Right ventricle myocardium inferior (tissue), 1 donor: ENCODE measurements at regions of chr14 and their contacts with region 1.

Region 1: GRCh38 chr14:32786886-32787285 is 151.8 kb upstream of the NPAS3 start:
- DNase-seq: no peak
- ATAC-seq: no peak

Region 2: DNA sequence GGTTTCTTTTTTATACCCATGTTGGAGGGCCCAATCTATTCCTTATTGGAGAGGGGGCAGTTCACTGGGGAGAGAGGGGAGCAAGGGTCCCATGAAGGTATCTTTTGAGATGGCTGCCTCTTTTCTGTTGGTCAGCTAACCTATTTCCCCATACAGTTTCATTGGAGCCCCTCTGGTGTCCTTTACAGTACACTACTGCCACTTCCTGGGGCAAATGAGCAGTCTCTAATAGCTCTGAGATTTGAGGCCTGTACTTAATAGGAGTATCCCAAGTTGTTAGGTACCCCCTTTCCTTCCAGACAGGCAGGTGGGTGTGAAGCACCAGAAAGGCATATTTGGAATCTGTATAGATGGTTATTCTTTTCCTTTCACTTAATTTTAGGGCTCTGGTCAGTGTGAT is 542.5 kb before region 1 on chr14:
- intact Hi-C with region 1: no loop called
- DNase-seq: no peak
- ATAC-seq: no peak

Region 3: GRCh38 chr14:33810308-33810707 is 1023.4 kb after region 1 on chr14:
- intact Hi-C with region 1: loop called (anchors 5 kb)
- DNase-seq: no peak
- ATAC-seq: no peak